H1 (cell line): ENCODE measurements at regions of chr1 and their contacts with region 1.

Region 1: DNA sequence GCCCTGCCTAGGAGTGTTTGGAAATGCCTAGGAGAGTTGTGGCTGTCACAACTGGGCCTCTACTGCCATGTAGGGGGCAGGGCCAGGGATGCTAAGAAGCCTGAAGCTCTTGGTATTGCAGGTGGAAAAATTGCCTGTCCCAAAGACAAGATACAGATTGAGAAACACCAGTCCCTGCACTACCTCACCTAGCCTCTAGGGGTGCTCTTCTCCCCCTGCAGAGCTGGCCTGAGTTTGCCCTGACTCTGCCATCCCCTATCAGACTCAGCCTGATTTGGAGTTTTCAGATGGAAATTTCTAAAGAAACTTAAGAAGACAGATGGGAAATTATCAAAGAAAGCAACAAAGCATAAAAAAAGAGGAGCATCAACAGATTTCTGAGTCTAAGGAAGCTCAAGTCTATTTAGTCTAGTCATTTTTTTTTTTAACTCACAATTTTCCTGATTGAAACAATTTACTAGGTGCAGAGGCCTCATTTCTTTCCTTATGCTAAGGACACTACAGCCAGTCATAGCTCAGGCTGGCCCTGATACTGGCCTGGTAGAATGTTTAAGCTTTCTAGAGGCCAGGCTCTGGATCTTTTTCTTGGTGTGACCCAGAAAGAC is 61.4 kb upstream of the LRRN2 start:
- DNase-seq: peak; percentile 43 to 75
- H3K4me3 ChIP-seq: no peak overlapping the region
- H3K27ac ChIP-seq: no peak overlapping the region
- H3K4me1 ChIP-seq: peaks cover 0 to 6% (median 4%) of the 10 kb centered on the region in 4 experiments; a peak in 5 of 7 replicates
- H3K27me3 ChIP-seq: no peaks in the 10 kb centered on the region
- CTCF ChIP-seq: peak; percentile 80 to 97 (median 82)
- EP300 ChIP-seq: no peak
- POLR2A ChIP-seq: no peak
- RAD21 ChIP-seq: peak; percentile 55 to 65

Region 2: DNA sequence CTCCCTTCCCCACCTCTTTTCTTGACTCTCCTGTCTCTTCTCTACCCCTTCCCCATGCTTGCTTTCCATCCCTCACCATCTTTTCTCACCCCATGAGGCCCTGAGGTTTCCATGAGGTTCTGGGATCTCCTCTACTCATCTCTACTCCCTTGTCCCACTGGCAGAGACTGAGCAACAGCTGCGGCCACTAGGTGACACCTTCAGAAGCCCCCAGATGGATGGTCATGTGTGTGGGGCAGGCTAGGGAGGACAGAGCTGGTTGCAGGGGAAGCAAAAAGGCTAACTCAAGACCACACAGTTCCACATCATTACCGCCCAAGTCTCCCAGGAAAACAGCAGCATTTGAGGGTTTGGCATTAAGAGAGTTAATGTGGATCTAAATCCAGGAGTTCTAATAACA is 106.4 kb before region 1 on chr1:
- CTCF ChIA-PET with region 1: interaction called, 15 read pairs
- POLR2A ChIA-PET with region 1: no interaction called
- DNase-seq: no peak
- H3K4me3 ChIP-seq: no peak overlapping the region
- H3K27ac ChIP-seq: no peak overlapping the region
- H3K4me1 ChIP-seq: no peaks in the 10 kb centered on the region
- H3K27me3 ChIP-seq: no peaks in the 10 kb centered on the region
- CTCF ChIP-seq: 0 out of 4 replicates have a peak, but pooled peaks of 1 of the 3 experiments have one; percentile 16
- EP300 ChIP-seq: no peak
- POLR2A ChIP-seq: no peak
- RAD21 ChIP-seq: no peak; a peak in 1 of 4 replicates

Region 3: DNA sequence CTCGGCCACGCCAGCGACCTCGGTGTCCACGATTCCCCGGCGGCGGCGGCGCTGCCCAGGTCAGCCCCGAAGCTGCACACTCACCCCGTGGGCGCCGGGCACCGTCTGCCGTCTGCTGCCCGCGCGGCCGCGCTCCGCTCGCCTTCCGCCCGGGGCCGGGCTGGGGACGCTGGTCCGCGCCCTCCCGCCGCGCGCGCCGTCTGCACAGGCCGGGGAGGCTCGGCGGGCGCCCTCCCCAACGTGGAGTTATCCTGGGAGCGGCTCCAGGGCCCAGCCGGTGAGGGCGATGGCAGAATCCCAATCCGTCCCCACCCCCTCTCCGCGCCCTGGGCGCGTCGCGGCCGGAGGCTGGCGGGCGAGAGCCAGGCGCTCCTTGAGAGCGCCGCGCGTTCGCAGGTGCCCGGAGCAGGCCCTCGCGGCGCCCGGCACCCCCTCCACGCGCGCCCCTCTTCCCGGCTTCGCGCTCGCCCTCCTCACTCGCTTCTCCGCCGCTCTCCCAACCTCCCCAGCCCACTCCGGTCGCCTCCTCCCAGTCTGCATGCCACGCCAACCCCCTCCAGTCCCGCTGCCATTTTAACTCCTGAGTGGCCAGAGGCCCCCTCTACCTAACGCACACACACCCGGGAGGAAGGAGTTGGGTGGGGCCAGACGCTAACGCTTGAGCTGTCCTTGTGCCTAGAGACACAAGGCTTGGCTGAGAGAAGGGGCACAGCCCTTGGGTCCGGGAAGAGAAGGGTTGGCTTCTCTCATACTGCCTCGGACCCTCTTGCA is 61.5 kb before region 1 on chr1 and contains the start of gene LRRN2:
- CTCF ChIA-PET with region 1: interaction called, 34 read pairs
- POLR2A ChIA-PET with region 1: no interaction called
- DNase-seq: peak in 1 of 2 experiments; percentile 66
- H3K4me3 ChIP-seq: peak within 1 kb of the TSS; percentile 43 to 66 (median 60)
- H3K27ac ChIP-seq: no peak within 1 kb of the TSS
- H3K4me1 ChIP-seq: peaks cover 0 to 12% (median 7%) of the 10 kb centered on the region in 4 experiments; a peak in 6 of 7 replicates
- H3K27me3 ChIP-seq: peaks cover 13 to 50% (median 44%) of the 10 kb centered on the region in 4 experiments
- CTCF ChIP-seq: no peak; a peak in 1 of 4 replicates
- EP300 ChIP-seq: no peak
- POLR2A ChIP-seq: no peak
- RAD21 ChIP-seq: no peak
- total RNA-seq, gene LRRN2: 2.3 and 2.5 TPM in 2 replicates

Region 4: DNA sequence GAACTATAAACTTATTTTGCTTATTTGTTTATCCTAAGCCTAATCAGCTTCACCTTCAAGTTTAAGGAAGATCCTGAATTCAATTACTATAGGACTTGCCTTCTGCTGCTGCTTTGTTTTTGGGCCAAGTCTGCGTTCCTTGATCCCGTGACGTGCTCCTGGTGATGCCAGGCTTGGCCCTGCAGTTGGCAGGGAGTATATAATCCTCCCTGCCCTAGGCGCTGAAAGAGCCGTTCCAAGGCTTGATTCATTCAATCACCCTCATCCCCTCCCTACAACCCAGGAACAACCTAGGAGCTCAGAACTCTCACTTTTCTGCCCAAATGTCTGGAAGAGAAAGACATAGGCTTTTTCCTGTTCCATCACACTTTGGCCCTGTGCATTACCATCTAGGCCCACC is 49.0 kb before region 1 on chr1:
- CTCF ChIA-PET with region 1: interaction called, 16 read pairs
- POLR2A ChIA-PET with region 1: no interaction called
- DNase-seq: no peak
- H3K4me3 ChIP-seq: no peak overlapping the region
- H3K27ac ChIP-seq: no peak overlapping the region
- H3K4me1 ChIP-seq: peaks cover 1 to 4% (median 2%) of the 10 kb centered on the region in 4 experiments; a peak in 5 of 7 replicates
- H3K27me3 ChIP-seq: 0 out of 7 replicates have a peak, but pooled peaks cover 0 to 2% (median 0%) of the 10 kb centered on the region in 4 experiments
- CTCF ChIP-seq: no peak
- EP300 ChIP-seq: no peak
- POLR2A ChIP-seq: no peak
- RAD21 ChIP-seq: no peak

Region 5: GRCh38 chr1:204714861-204715511 is 32.0 kb before region 1 on chr1:
- CTCF ChIA-PET with region 1: interaction called, 35 read pairs
- POLR2A ChIA-PET with region 1: no interaction called
- DNase-seq: no peak
- H3K4me3 ChIP-seq: peak overlapping the region in 1 of 4 experiments; percentile 38; a peak in 2 of 8 replicates
- H3K27ac ChIP-seq: no peak overlapping the region
- H3K4me1 ChIP-seq: peaks cover 12 to 29% (median 20%) of the 10 kb centered on the region in 4 experiments
- H3K27me3 ChIP-seq: peaks cover 22 to 54% (median 46%) of the 10 kb centered on the region in 4 experiments
- CTCF ChIP-seq: peak; percentile 55 to 72 (median 65)
- EP300 ChIP-seq: no peak
- POLR2A ChIP-seq: no peak
- RAD21 ChIP-seq: peak; percentile 69 to 74

Region 6: GRCh38 chr1:204730826-204731459 is 16.0 kb before region 1 on chr1:
- CTCF ChIA-PET with region 1: interaction called, 40 read pairs
- POLR2A ChIA-PET with region 1: interaction called, 3 read pairs
- DNase-seq: peak in 1 of 2 experiments; percentile 41
- H3K4me3 ChIP-seq: no peak overlapping the region
- H3K27ac ChIP-seq: no peak overlapping the region
- H3K4me1 ChIP-seq: peaks cover 0 to 6% (median 2%) of the 10 kb centered on the region in 4 experiments; a peak in 3 of 7 replicates
- H3K27me3 ChIP-seq: no peaks in the 10 kb centered on the region; a peak in 1 of 7 replicates
- CTCF ChIP-seq: no peak
- EP300 ChIP-seq: no peak
- POLR2A ChIP-seq: no peak
- RAD21 ChIP-seq: no peak

Region 7: GRCh38 chr1:204791453-204792353 is 44.8 kb after region 1 on chr1:
- CTCF ChIA-PET with region 1: interaction called, 14 read pairs
- POLR2A ChIA-PET with region 1: no interaction called
- DNase-seq: peak; percentile 79 to 95
- H3K4me3 ChIP-seq: no peak overlapping the region
- H3K27ac ChIP-seq: no peak overlapping the region
- H3K4me1 ChIP-seq: no peaks in the 10 kb centered on the region
- H3K27me3 ChIP-seq: no peaks in the 10 kb centered on the region; a peak in 2 of 7 replicates
- CTCF ChIP-seq: peak; percentile 79 to 95 (median 91)
- EP300 ChIP-seq: no peak
- POLR2A ChIP-seq: no peak
- RAD21 ChIP-seq: peak; percentile 47 to 62; a peak in 3 of 4 replicates

Region 8: DNA sequence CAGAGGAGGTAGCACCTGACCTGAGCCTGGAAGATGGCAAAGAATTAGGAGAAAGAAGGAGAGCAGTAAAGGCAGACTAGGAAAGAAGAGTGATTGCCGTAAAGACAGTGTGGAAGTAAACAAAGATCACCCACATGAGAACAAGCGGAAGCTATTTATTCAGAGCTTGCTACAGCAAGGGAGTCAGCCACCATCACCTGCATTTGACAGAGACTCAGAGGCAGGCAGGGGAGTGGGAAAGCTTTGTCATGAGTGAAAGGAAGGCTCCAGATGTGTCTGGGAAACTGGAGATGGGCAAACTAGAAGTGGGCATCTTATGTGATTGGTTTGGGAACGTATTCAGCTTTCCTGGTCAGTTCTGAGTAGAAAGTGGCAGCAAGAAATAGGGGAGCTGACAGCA is 188.2 kb after region 1 on chr1:
- CTCF ChIA-PET with region 1: no interaction called
- POLR2A ChIA-PET with region 1: no interaction called
- DNase-seq: no peak
- H3K4me3 ChIP-seq: no peak overlapping the region
- H3K27ac ChIP-seq: no peak overlapping the region
- H3K4me1 ChIP-seq: peaks cover 0 to 4% (median 0%) of the 10 kb centered on the region in 4 experiments; a peak in 2 of 7 replicates
- H3K27me3 ChIP-seq: no peaks in the 10 kb centered on the region; a peak in 1 of 7 replicates
- CTCF ChIP-seq: no peak
- EP300 ChIP-seq: no peak
- POLR2A ChIP-seq: no peak
- RAD21 ChIP-seq: no peak